ENCODE measurements at regions of chr10 and their contacts with region 1.

Region 1: GRCh38 chr10:97792141-97792721 is 20.4 kb upstream of the SFRP5 start:
- DNase-seq: no peak
- H3K4me3 ChIP-seq: no peak overlapping the region
- CTCF ChIP-seq: peak; percentile 97

Region 2: DNA sequence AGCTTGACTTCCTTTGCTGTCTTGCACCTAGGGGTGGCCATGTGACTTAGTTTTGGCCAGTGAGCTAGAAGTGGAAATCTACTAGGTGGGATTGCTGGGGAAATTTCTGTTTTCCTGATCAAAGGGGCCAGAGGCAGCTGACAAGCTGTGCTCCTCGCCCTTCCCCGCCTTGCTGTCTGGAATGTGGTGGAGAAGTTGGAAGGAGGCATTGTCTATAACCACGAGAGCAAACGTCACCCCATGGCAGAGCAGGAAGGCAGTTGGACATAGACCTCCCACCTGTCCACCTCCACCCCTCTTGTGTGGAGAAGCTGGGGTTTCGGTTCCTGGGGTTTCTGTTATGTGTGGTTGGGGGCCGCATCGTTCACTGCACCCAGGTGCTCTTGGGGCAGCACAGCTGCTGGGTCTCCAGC is 27.7 kb before region 1 on chr10:
- CTCF ChIA-PET with region 1: interaction called, 11 read pairs
- POLR2A ChIA-PET with region 1: no interaction called
- DNase-seq: no peak
- H3K4me3 ChIP-seq: no peak overlapping the region
- CTCF ChIP-seq: no peak

Region 3: DNA sequence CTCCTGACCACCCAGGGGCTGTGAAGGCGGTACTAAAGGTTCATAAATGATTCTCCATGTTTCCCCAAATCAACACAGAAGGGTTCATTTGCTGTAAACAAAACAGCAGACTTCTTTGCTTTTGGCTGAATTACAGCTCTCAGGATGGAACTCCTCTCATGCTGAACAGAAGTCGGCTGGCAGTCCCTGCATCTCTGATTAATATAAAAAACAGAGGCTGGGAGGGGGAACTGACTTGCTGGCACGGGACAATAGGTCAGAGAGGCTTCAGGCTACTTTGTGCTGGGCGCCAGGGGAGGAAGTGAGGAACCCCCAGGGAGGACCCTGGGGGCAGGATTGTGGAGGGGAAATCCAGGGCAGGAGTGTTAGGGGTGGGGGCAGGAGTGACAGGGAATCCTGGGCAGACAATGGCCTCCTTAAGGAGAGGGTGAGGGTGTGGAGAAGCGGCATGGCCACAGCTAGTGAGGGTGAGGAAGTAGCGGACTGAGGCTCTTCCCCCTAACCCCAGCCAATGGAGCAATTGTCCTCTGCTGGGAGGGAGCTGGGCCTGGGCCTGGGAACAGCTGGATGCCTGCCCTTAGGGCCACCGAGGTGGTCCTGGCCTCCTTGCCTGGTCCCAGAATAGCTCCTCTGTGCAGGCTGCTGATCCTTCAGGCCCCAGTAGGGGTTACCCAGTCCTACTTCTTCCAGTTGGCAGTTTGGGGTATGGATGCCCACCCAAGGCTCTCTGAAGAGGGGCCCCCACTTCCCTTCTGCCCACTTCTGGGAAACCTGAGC is 11.2 kb before region 1 on chr10:
- CTCF ChIA-PET with region 1: interaction called, 11 read pairs
- POLR2A ChIA-PET with region 1: no interaction called
- DNase-seq: no peak
- H3K4me3 ChIP-seq: no peak overlapping the region
- CTCF ChIP-seq: no peak

Region 4: DNA sequence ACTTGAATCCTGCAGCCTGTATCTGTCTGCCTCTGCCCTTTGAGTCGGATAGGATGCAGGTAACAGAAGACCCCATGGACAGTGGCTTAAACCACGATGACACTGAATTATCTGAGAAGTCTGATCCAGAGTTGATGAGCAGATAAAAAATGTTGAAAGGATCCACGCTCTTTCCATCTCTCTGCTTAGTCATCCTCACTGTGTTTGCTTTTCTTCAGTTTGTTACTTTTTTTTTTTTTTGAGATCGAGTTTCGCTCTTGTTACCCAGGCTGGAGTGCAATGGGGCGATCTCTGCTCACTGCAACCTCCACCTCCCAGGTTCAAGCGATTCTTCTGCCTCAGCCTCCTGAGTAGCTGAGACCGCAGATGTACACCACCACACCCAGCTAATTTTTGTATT is 20.5 kb after region 1 on chr10:
- CTCF ChIA-PET with region 1: interaction called, 15 read pairs
- POLR2A ChIA-PET with region 1: no interaction called
- DNase-seq: no peak
- H3K4me3 ChIP-seq: no peak overlapping the region
- CTCF ChIP-seq: no peak

Region 5: DNA sequence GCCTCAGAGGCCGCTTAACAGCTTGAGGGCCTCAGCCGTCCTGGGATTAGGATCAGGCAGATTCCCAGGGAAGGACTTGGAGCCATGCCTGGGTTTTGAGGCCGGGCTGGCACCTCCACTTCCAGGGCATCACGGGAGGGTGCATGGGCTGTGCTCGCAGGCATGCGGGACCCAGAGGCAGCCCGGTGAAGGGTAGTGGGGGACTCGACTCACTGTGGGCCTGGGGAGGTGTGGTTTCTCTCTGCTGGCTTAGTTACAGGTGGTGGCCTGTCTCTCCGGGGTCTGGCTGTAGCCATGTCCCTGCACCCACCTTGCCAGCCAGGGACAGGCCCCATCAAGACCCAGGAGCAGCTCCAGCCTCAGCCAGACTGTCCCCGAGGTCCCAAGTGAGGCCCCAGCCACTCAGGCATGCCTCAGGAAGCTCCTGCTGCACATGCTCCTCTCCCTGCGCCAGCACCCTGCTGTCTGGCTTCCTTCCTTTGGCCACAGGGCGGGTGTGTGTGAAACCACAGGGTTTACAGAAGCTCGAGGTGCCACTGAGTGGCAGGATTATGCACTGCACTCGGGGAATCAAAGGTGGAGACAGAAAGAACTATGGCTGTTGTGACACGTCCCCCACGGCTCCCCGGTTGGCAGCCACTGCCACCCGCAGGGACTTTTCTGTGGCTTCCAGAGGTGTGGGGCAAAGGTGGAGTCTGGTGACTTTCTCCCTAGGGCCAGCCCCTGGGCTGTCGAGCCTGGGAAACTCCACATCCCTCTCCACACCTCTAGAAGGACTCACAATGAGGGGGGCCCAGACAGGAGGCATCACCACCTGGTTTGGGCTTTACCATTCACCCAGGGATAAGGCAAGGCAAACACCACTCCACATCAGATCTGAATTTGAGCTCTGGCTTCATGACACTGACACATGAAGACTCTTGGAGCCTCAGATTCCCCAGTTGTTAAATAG is 77.1 kb after region 1 on chr10:
- CTCF ChIA-PET with region 1: interaction called, 176 read pairs
- POLR2A ChIA-PET with region 1: no interaction called
- DNase-seq: no peak
- H3K4me3 ChIP-seq: no peak overlapping the region
- CTCF ChIP-seq: peak; percentile 71

Region 6: DNA sequence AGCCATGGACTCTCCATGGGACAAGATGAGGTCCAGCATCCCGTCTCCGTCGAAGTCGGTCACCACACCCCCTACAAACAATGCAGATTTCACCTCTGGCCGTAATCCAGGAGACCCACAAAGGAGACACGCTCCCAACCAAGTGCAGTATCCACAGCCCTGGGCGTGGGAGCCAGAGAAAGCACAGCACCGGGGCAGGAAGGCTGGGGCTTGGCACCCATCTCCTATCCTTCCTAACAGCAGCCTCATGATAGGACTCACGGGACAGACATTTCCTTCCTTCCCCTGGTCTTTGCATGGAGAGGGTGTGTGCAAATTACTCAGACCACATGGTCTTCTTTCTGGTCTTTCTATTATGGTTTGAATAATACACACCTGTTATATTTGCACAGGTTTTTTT is 103.7 kb after region 1 on chr10:
- CTCF ChIA-PET with region 1: no interaction called
- POLR2A ChIA-PET with region 1: no interaction called
- DNase-seq: no peak
- H3K4me3 ChIP-seq: no peak overlapping the region
- CTCF ChIP-seq: no peak